ENCODE measurements at regions of chr9 and their contacts with region 1.

Region 1: DNA sequence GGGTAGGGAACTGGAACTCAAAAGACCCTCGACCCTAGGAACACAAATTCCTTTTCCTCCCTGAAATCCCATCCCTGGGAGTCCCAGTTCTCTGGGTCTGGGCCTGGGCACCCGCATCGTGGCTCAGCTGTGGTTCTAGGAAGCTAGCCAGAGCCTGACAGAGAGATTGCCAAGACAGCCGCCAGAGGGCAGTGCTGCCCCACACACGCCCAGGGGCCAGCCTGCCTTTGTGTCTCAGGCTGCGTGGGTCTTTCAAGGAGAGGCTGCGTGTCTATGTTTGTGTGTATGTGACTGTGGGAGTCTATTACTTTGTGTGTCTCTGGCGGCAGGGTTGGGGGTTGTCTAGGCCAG is 32.0 kb upstream of the TTLL11 start:
- DNase-seq: peak; percentile 79
- H3K4me3 Mint-ChIP-seq: no peak overlapping the region
- H3K27ac Mint-ChIP-seq: no peak overlapping the region
- H3K4me1 Mint-ChIP-seq: peaks cover 18% of the 10 kb centered on the region
- H3K27me3 Mint-ChIP-seq: peaks cover 11% of the 10 kb centered on the region
- CTCF ChIP-seq: peak; percentile 98

Region 2: GRCh38 chr9:122029898-122030297 is 95.2 kb before region 1 on chr9:
- CTCF ChIA-PET with region 1: no interaction called
- POLR2A ChIA-PET with region 1: no interaction called
- intact Hi-C with region 1: no loop called
- DNase-seq: peak; percentile 59
- H3K4me3 Mint-ChIP-seq: no peak overlapping the region
- H3K27ac Mint-ChIP-seq: no peak overlapping the region
- H3K4me1 Mint-ChIP-seq: no peaks in the 10 kb centered on the region
- H3K27me3 Mint-ChIP-seq: no peaks in the 10 kb centered on the region
- CTCF ChIP-seq: no peak

Region 3: DNA sequence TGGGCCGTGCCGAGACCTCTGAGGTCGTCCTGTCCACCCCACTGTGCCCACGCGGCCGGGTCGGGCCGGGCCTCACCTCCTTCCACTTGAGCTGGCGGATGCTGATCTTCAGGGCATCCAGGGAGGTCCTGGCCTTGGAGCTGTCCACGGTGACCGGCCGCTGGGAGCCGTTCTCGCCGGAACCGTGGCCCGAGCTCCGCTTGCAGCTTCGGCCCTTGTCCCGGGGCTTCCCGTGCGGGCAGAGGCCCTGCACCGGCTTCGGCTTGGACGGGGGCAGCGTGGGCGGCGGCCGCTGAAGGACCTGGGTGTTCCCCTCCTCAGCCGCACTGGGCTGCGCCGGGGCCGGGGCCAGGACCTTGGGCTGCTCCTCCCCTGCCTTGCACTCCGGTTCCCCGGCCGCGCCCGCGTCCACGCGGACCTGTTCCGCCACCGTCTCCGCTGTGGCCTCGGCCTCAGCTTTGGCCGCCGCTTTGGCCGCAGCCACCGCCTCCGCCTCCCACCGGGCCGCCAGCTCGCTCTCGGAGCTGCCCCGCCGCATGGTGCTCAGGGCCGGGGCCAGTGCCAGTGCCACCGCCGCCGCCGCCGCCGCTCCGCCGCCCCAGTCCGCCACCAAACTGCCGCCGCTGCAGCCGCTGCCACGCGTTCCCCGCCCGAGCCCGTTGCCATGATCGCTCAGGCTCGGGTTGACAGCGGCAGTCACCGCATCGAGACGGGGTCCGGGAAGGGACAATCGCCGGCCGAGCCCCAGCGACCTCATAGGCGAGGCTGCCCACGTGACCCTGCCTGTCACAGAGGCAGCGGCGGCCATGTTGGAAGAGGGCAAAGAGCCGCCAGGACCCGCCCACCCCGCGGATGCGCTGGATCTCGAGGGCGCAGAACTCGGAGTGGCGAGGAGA is 32.3 kb before region 1 on chr9 and contains the start of gene TTLL11:
- CTCF ChIA-PET with region 1: interaction called, 237 read pairs
- POLR2A ChIA-PET with region 1: no interaction called
- intact Hi-C with region 1: no loop called
- DNase-seq: peak; percentile 95
- H3K4me3 Mint-ChIP-seq: peak within 1 kb of the TSS; percentile 91
- H3K27ac Mint-ChIP-seq: peak within 1 kb of the TSS; percentile 57
- H3K4me1 Mint-ChIP-seq: peaks cover 33% of the 10 kb centered on the region
- H3K27me3 Mint-ChIP-seq: no peaks in the 10 kb centered on the region
- CTCF ChIP-seq: no peak
- total RNA-seq, gene TTLL11: 9.0 and 13.6 TPM in 2 replicates

Region 4: GRCh38 chr9:122138560-122139268 is 13.6 kb after region 1 on chr9:
- CTCF ChIA-PET with region 1: interaction called, 75 read pairs
- POLR2A ChIA-PET with region 1: no interaction called
- intact Hi-C with region 1: no loop called
- DNase-seq: no peak
- H3K4me3 Mint-ChIP-seq: no peak overlapping the region
- H3K27ac Mint-ChIP-seq: no peak overlapping the region
- H3K4me1 Mint-ChIP-seq: no peaks in the 10 kb centered on the region
- H3K27me3 Mint-ChIP-seq: no peaks in the 10 kb centered on the region
- CTCF ChIP-seq: no peak

Region 5: DNA sequence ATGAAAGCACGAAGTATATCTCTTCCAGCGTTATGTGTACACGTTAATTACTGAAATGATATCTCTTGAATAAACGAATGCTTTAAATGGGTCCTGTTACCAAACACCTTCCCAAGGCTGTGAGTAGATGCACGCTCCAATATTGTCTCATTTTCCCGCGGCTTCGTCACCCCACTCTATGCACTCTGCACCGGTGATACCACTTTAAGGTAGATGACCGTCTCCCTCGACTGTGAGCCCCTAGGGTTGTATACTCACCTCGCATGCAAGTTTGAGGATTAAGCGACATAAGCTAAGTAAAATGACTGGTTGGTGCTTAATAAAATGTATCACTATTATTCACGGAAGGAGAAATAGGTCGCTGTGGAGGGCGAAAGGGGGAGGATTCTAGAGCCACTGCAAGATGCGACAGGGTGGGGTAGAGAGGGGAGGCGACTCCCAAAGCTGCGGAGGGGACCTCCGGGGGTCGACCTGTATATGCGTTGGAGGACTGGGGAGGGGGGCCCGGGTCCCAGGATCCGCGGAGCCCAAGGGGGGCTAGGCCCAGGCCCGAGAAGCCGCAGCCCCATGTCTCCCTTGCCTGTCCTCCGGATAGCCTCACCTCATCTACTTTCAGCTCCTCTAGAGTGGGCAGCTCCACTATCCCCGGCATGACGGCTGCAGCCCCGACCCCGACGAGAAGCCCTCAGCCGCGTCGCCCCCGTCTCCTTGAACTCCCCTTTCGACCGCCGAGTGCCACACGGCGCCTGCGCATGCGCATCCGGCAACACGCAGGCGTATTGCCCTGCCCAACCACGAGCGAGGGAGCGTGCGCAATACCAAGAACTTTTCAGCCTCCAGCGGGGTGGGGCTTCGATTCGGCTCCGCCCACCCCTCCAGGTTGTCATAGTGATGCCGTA is 34.1 kb after region 1 on chr9 and contains the starts of genes MORN5 and NDUFA8:
- CTCF ChIA-PET with region 1: interaction called, 48 read pairs
- POLR2A ChIA-PET with region 1: interaction called, 3 read pairs
- intact Hi-C with region 1: no loop called
- DNase-seq: peak; percentile 95
- H3K4me3 Mint-ChIP-seq: peak within 1 kb of the TSS; percentile 100
- H3K27ac Mint-ChIP-seq: peak within 1 kb of the TSS; percentile 96
- H3K4me1 Mint-ChIP-seq: peaks cover 34% of the 10 kb centered on the region
- H3K27me3 Mint-ChIP-seq: peaks cover 15% of the 10 kb centered on the region
- CTCF ChIP-seq: no peak
- total RNA-seq, gene MORN5: not detected in 2 replicates
- total RNA-seq, gene NDUFA8: 52.5 and 58.4 TPM in 2 replicates

Region 6: GRCh38 chr9:122350638-122351355 is 225.7 kb after region 1 on chr9:
- CTCF ChIA-PET with region 1: interaction called, 473 read pairs
- POLR2A ChIA-PET with region 1: interaction called, 3 read pairs
- intact Hi-C with region 1: loop called (anchors 1 kb)
- DNase-seq: peak; percentile 77
- H3K4me3 Mint-ChIP-seq: no peak overlapping the region
- H3K27ac Mint-ChIP-seq: no peak overlapping the region
- H3K4me1 Mint-ChIP-seq: no peaks in the 10 kb centered on the region
- H3K27me3 Mint-ChIP-seq: no peaks in the 10 kb centered on the region
- CTCF ChIP-seq: peak; percentile 89

Region 7: DNA sequence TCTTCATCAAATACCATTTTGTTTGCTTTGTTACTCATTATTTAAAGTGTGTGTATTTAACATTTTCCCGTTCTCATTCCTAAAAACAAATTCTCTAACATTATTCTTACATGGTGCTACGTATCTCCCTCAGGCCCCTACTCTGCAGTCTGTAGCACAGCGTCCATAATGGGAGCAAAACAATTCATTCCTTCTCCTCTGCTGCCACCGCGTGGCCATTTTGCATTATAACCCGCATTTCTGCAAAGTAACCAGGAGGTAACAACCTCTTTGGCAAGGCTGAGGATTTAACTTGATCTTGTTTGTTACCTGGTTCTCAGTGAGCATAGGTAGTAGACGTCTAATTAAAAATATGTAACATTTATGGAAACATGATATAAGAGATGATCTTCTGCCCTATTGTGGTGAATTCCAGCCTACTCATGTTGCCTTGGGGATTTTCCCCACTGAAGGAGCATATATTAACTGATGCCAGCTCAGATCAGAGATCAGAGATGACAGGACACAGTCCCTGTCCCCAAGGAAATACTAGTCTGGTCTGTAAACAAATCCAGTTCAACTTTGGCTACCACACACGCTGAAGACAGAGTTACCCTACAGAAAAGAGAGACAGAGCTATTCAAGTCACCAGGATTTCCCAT is 685.3 kb after region 1 on chr9:
- CTCF ChIA-PET with region 1: interaction called, 11 read pairs
- POLR2A ChIA-PET with region 1: no interaction called
- intact Hi-C with region 1: loop called (anchors 1 kb)
- DNase-seq: peak; percentile 87
- H3K4me3 Mint-ChIP-seq: no peak overlapping the region
- H3K27ac Mint-ChIP-seq: no peak overlapping the region
- H3K4me1 Mint-ChIP-seq: peaks cover 3% of the 10 kb centered on the region
- H3K27me3 Mint-ChIP-seq: no peaks in the 10 kb centered on the region
- CTCF ChIP-seq: peak; percentile 76